ENCODE measurements at regions of chr3 and their contacts with region 1.

Region 1: GRCh38 chr3:9439331-9439730 is 41.9 kb downstream of the SETD5 start:
- DNase-seq: no peak
- ATAC-seq: no peak
- H3K4me3 ChIP-seq: no peak overlapping the region
- H3K4me1 ChIP-seq: no peaks in the 10 kb centered on the region
- CTCF ChIP-seq: no peak

Region 2: DNA sequence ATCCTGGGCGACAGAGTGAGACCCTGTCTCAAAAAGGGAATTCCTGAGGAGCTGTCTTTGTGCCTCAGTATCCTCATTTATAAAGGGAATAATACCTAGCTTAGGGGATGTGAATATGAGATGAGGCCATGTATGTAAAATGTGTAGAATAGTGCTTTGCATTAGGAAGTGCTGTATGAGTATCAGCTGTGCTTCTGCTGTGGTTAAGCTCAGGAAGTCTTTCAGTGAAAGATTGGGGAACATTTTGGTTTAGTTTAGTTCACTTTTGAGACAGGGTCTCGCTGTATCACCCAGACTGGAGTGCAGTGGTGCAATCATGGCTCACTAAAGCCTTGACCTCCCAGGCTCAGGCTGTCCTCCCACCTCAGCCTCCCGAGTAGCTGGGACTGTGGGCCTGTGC is 65.9 kb before region 1 on chr3:
- intact Hi-C with region 1: loop called in 1 of 2 experiments (anchors 10 kb)
- DNase-seq: no peak
- ATAC-seq: no peak
- H3K4me3 ChIP-seq: no peak overlapping the region
- H3K4me1 ChIP-seq: no peaks in the 10 kb centered on the region
- CTCF ChIP-seq: no peak

Region 3: DNA sequence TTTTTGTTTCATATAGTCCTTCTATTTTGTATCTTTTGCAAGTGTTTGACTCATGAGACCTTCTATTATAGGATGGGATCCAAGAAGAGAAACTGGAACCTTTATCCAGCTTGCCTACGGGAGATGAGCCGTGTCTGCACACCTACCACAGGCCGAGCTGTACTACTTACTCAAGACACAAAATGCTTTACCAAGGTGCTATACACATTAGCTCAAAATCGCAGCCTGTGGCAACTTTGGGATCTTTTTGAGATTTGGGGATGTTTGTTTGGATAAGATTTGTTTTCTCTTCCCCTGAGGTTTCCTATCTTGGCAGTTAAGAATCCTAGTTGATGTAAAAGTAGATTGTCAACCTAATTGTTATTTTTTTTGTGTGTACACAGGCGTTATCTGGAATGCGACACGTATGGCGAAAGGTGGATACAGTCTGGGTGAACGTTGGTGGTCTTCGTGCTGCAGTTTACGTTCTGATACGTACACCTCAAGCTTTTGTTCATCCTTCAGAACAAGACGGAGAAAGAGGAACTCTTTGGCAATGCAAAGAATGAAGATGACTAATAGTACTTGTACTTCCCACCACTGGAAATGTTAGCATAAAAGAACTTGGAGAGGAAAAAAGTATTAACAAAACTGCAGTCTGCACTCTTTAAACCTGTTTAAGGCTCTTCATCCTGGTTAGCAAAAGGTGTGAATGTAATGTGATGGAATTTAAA is 55.0 kb before region 1 on chr3:
- intact Hi-C with region 1: loop called (anchors 10 kb)
- DNase-seq: no peak
- ATAC-seq: no peak
- H3K4me3 ChIP-seq: no peak overlapping the region
- H3K4me1 ChIP-seq: no peaks in the 10 kb centered on the region
- CTCF ChIP-seq: no peak

Measured in mucosa of descending colon (tissue), 3 donors.